ENCODE measurements at regions of chr1 and their contacts with region 1.

Region 1: DNA sequence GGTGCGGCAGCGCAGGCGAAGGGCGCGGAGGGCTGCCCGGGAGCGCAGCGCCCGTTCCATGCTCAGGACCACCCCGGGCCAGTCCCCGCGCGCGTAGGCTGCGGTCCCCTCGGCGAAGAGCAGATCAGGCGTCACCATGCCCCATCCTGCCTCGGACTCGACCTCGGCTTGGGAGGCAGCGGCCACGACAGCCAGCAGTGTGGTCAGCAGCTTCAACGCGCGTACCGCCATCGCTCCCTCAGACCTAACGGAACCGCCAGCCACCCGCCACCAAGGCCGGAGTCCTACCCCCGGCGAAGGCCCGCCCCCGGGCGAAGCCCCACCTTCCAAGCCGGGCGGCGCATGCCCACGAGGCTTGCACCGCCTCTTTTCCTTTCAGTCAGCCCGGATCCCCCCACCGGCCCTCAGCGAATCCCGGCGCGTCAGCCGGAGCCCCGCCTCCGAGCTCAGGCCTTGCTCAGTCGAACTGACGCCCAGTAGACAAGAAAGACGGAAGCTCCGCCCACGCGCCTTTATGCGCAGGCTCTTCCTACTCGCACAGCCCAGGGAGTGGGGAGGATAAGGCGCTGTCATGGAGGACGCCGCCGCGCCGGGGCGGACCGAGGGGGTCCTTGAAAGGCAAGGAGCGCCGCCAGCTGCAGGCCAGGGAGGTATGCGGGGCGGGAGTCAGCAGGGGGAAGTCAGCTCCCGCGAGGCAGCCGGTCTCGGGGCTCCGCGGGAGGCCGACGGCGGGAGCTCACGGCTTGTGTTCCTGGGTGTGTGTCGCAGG is at the starts of genes C1orf50 and P3H1:
- DNase-seq: peak; percentile 100
- H3K4me3 ChIP-seq: peak within 1 kb of the TSS; percentile 65 to 91 (median 90)
- H3K27ac ChIP-seq: peak within 1 kb of the TSS; percentile 62
- H3K4me1 ChIP-seq: peaks cover 20% of the 10 kb centered on the region
- H3K27me3 ChIP-seq: no peaks in the 10 kb centered on the region
- CTCF ChIP-seq: no peak
- POLR2A ChIP-seq: peak; percentile 92
- total RNA-seq, gene C1orf50: 4.0 and 7.4 TPM in 2 replicates
- total RNA-seq, gene P3H1: 136 and 146 TPM in 2 replicates

Region 2: DNA sequence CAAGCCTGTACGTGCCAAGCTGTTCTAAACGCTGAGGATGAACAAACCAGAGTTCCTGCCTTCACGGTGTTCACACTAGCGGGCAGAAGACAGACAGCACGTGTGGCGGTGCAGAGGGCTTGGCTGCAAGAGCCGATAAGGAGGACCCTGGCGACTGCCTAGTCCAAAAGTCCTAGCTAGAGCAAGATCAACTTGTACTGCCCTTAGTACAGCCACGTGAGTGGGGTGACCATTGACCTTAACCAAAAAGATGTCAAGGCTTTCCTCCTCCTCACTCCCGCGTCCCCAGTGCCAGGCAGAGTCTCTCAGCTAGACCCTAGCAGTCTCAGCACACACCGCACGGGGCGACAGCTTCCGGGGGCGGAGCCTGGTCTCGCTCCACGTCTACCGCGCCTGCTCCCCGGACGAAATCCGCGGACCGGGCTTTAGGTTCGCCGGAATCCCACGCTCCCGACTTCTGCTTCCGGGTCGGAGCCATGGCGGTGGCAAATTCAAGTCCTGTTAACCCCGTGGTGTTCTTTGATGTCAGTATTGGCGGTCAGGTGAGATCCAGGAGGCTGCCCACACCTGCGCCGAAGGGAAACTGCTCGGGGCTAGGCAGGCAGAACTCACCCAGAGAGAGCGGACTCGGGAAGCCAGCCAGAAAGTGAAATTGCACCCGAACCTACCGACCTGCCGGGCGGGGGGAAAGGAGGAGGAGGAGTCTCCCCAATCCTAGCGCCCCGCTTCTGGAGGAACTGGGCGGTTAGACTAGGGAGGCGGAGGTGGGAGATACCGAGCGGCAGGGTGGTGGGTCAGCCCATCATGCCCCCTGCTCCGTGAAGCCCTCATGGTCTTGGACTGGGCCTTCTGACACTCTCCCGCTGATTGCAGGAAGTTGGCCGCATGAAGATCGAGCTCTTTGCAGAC is 108.7 kb before region 1 on chr1 and contains the start of gene PPIH:
- CTCF ChIA-PET with region 1: no interaction called
- POLR2A ChIA-PET with region 1: no interaction called
- dilution Hi-C with region 1: no loop called
- intact Hi-C with region 1: loop called (anchors 1 kb)
- DNase-seq: peak; percentile 93
- H3K4me3 ChIP-seq: peak within 1 kb of the TSS; percentile 55 to 86 (median 72)
- H3K27ac ChIP-seq: peak within 1 kb of the TSS; percentile 14
- H3K4me1 ChIP-seq: peaks cover 14% of the 10 kb centered on the region
- H3K27me3 ChIP-seq: peaks cover 7 to 8% of the 10 kb centered on the region in 2 experiments
- CTCF ChIP-seq: no peak
- POLR2A ChIP-seq: peak; percentile 94
- total RNA-seq, gene PPIH: 49.3 and 52.1 TPM in 2 replicates

Region 3: DNA sequence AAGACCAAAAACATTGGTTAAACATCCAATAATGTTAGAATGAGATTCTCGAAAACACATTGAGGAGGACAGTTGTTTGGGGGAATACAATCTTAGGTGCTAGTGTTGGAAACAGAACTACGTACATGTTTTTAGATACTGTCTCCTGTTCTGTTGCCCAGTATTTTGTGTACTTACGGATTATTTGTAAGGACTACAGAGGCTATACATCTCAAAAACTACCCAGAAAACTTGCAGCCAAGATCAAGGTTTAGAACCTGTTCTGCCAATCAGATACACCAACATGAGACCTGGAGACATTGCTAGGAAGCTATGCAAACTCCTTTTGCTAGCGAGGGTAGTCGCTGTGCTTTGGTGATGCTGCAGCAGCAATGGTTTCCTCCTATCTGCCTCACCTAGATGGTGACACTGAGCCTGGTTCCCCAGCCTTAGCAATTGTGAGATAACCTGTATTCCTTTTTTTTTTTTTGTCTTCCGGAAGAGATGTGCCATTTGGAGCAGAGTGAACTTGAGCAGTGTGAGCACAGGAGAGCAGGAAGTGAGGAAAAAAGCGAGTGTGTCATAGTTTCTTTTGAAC is 62.9 kb before region 1 on chr1:
- CTCF ChIA-PET with region 1: no interaction called
- POLR2A ChIA-PET with region 1: no interaction called
- dilution Hi-C with region 1: no loop called
- intact Hi-C with region 1: no loop called
- DNase-seq: no peak
- H3K4me3 ChIP-seq: no peak overlapping the region
- H3K27ac ChIP-seq: no peak overlapping the region
- H3K4me1 ChIP-seq: no peaks in the 10 kb centered on the region
- H3K27me3 ChIP-seq: no peaks in the 10 kb centered on the region
- CTCF ChIP-seq: no peak
- POLR2A ChIP-seq: no peak

Region 4: GRCh38 chr1:42777852-42778251 is 10.9 kb after region 1 on chr1:
- CTCF ChIA-PET with region 1: interaction called, 12 read pairs
- POLR2A ChIA-PET with region 1: interaction called, 3 read pairs
- dilution Hi-C with region 1: no loop called
- intact Hi-C with region 1: no loop called
- DNase-seq: peak; percentile 54
- H3K4me3 ChIP-seq: no peak overlapping the region
- H3K27ac ChIP-seq: no peak overlapping the region
- H3K4me1 ChIP-seq: no peaks in the 10 kb centered on the region
- H3K27me3 ChIP-seq: no peaks in the 10 kb centered on the region
- CTCF ChIP-seq: peak; percentile 59 to 67
- POLR2A ChIP-seq: no peak

Region 5: DNA sequence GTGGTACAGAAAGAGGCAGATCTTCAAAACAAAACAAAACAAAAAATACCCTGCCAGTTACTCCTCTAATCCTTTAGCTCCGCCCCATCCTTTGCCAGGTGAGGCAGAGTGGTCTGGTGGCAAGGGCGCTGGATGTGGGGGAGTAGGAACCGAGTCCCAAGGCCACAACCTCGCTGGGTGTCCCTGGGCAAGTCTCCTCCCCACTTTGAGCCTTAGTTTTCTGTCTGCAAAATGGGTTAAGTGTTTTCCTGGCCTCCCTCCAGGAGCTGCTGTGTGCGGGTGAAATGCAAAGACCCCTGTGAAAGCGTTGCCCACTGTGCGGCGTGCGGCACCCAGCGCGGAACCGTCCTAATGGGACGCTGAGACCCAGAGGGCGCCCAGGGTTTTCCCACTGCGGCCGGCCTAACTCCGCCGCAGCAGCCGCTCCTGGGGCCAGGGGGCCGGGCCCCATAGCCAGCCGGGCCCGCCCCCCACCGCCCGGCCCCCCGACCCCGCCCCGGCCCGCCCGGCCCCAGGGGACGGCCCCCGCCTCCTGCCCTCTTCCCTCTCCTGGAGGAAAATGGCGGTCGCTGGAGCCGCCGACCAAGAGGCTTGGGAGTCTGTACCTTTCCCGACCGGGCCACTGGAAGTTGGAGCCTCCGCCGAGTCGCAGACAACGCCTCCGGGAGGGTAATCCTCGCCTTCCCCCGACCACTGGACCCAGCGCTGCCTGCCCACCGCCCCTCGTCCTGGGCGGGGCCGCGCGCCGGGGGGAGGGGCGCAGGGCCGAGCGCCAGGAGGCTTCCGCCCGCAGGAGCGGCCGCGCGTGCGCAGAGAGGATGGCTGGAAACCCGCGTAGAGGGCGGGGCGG is 49.9 kb after region 1 on chr1 and contains the starts of genes ERMAP and SVBP:
- CTCF ChIA-PET with region 1: interaction called, 7 read pairs
- POLR2A ChIA-PET with region 1: interaction called, 10 read pairs
- dilution Hi-C with region 1: no loop called
- intact Hi-C with region 1: loop called (anchors 1 kb)
- DNase-seq: peak; percentile 89
- H3K4me3 ChIP-seq: peak within 1 kb of the TSS; percentile 73 to 87 (median 74)
- H3K27ac ChIP-seq: peak within 1 kb of the TSS; percentile 91
- H3K4me1 ChIP-seq: peaks cover 18% of the 10 kb centered on the region
- H3K27me3 ChIP-seq: no peaks in the 10 kb centered on the region
- CTCF ChIP-seq: no peak
- POLR2A ChIP-seq: peak; percentile 89
- total RNA-seq, gene ERMAP: 7.8 and 7.9 TPM in 2 replicates
- total RNA-seq, gene SVBP: 24.1 and 24.7 TPM in 2 replicates

Region 6: DNA sequence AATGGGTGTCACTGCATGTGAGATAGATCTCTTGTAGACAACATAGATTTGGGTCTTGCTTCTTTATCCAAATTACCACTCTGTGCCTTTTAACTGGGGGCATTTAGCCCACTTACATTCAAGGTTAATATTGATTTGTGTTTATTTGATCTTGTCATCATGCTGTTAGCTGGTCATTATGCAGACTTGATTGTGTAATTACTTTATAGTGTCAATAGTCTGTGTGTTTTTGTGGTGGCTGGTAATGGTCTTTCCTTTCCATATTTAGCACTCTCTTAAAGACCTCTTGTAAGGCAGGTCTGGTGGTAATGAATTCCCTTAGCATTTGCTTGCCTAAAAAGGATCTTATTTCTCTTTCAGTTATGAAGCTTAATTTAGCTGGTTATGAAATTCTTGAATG is 109.1 kb after region 1 on chr1:
- CTCF ChIA-PET with region 1: no interaction called
- POLR2A ChIA-PET with region 1: no interaction called
- dilution Hi-C with region 1: no loop called
- intact Hi-C with region 1: no loop called
- DNase-seq: no peak
- H3K4me3 ChIP-seq: no peak overlapping the region
- H3K27ac ChIP-seq: no peak overlapping the region
- H3K4me1 ChIP-seq: no peaks in the 10 kb centered on the region
- H3K27me3 ChIP-seq: peaks cover 13 to 29% of the 10 kb centered on the region in 2 experiments
- CTCF ChIP-seq: no peak
- POLR2A ChIP-seq: no peak

Region 7: GRCh38 chr1:42924082-42924850 is 157.3 kb after region 1 on chr1:
- CTCF ChIA-PET with region 1: interaction called, 7 read pairs
- POLR2A ChIA-PET with region 1: no interaction called
- dilution Hi-C with region 1: no loop called
- intact Hi-C with region 1: loop called (anchors 5 kb)
- DNase-seq: peak; percentile 91
- H3K4me3 ChIP-seq: peak overlapping the region; percentile 63 to 87 (median 81)
- H3K27ac ChIP-seq: peak overlapping the region; percentile 75
- H3K4me1 ChIP-seq: peaks cover 10% of the 10 kb centered on the region
- H3K27me3 ChIP-seq: no peaks in the 10 kb centered on the region
- CTCF ChIP-seq: no peak
- POLR2A ChIP-seq: peak; percentile 85

Measured in endothelial cell of umbilical vein (primary cell).